K562 (cell line): ENCODE measurements at regions of chr6 and their contacts with region 1.

Region 1: GRCh38 chr6:75208298-75209183 is 2.7 kb upstream of the COL12A1 start:
- DNase-seq: peak; percentile 63 to 81 (median 70)
- ATAC-seq: peak; percentile 94
- H3K4me3 ChIP-seq: no peak overlapping the region
- H3K27ac ChIP-seq: no peak overlapping the region
- H3K4me1 ChIP-seq: peaks cover 0 to 10% of the 10 kb centered on the region in 2 experiments; a peak in 1 of 5 replicates
- H3K27me3 ChIP-seq: peaks cover 21 to 45% of the 10 kb centered on the region in 2 experiments; a peak in 4 of 5 replicates
- CTCF ChIP-seq: peak; percentile 82 to 91 (median 90)
- EP300 ChIP-seq: no peak
- POLR2A ChIP-seq: no peak
- RAD21 ChIP-seq: peak; percentile 88 to 92

Region 2: DNA sequence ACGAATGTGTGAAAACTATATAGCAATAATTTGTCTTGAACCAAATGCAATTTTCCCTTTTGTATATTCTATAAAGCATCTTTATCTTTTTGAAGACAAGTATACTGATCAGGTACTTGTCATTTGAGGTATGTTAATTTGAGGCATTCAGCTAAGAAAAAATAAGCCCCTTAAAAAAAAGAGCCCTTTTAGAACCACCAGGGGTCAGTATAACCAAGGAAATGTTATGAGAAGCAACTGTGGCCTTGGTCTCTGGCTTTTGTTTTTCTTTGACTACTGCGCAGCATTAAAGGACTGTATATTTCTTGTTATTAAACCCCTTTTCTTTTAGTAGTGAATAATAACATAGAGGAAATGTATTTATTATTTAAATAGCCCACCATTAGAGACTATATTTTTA is 1469.4 kb before region 1 on chr6:
- CTCF ChIA-PET with region 1: interaction called, 12 read pairs
- POLR2A ChIA-PET with region 1: no interaction called
- in situ Hi-C with region 1: loop called (anchors 5 kb)
- intact Hi-C with region 1: loop called (anchors 1 kb)
- DNase-seq: peak; percentile 34 to 73 (median 45)
- ATAC-seq: peak; percentile 88
- H3K4me3 ChIP-seq: no peak overlapping the region
- H3K27ac ChIP-seq: no peak overlapping the region
- H3K4me1 ChIP-seq: no peaks in the 10 kb centered on the region
- H3K27me3 ChIP-seq: no peaks in the 10 kb centered on the region
- CTCF ChIP-seq: peak; percentile 59 to 88 (median 59)
- EP300 ChIP-seq: no peak
- POLR2A ChIP-seq: no peak
- RAD21 ChIP-seq: peak; percentile 90 to 91

Region 3: DNA sequence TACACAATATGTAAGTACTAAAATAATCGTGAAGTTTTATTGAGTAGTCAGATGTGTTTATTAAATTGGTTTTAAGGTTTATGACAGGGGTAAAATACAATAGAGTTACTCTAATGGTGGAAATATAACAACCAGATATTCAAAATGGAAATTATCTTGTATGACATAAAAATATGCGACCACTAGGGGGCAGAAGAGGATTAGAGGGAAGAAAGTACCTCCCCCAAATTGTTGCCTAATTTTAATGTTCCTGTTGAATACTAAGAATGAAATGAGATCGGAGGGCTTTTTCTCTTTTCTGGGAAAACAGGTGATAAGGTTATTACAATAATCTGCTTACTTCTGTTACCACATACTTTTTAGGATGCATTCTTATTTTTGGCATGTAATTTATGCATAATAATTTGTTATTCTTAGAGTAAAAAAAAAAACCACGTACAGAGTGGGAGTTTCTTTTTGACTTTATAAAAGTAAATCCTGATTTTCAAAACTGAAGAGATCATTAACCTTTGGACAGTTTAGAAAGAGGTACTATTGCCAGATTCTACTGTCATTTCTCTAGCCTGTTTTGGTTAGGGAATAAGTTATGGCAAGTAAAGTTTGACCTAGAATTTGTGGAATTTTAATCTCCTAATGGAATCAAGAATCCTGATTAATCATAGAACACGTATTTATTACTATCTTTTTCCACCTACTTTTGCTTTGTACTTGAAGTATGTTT is 1353.4 kb before region 1 on chr6:
- CTCF ChIA-PET with region 1: interaction called, 10 read pairs
- POLR2A ChIA-PET with region 1: no interaction called
- in situ Hi-C with region 1: no loop called
- intact Hi-C with region 1: loop called (anchors 1 kb)
- DNase-seq: peak; percentile 29 to 71 (median 34)
- ATAC-seq: peak; percentile 56; the same call in 2 of the 3 replicates
- H3K4me3 ChIP-seq: no peak overlapping the region
- H3K27ac ChIP-seq: no peak overlapping the region
- H3K4me1 ChIP-seq: no peaks in the 10 kb centered on the region
- H3K27me3 ChIP-seq: no peaks in the 10 kb centered on the region
- CTCF ChIP-seq: peak; percentile 44 to 77 (median 50); a peak in 4 of 6 replicates
- EP300 ChIP-seq: no peak
- POLR2A ChIP-seq: no peak
- RAD21 ChIP-seq: peak; percentile 70 to 82

Region 4: GRCh38 chr6:74091136-74091793 is 1117.3 kb before region 1 on chr6:
- CTCF ChIA-PET with region 1: no interaction called
- POLR2A ChIA-PET with region 1: no interaction called
- in situ Hi-C with region 1: no loop called
- intact Hi-C with region 1: loop called (anchors 5 kb)
- DNase-seq: peak; percentile 17 to 26 (median 18)
- ATAC-seq: peak; percentile 62; the same call in 2 of the 3 replicates
- H3K4me3 ChIP-seq: no peak overlapping the region
- H3K27ac ChIP-seq: no peak overlapping the region
- H3K4me1 ChIP-seq: no peaks in the 10 kb centered on the region
- H3K27me3 ChIP-seq: no peaks in the 10 kb centered on the region
- CTCF ChIP-seq: peak; percentile 12 to 62 (median 50); a peak in 4 of 6 replicates
- EP300 ChIP-seq: no peak
- POLR2A ChIP-seq: no peak
- RAD21 ChIP-seq: peak in 1 of 2 experiments; percentile 36; a peak in 2 of 4 replicates

Region 5: GRCh38 chr6:75349262-75349984 is 140.9 kb after region 1 on chr6:
- CTCF ChIA-PET with region 1: no interaction called
- POLR2A ChIA-PET with region 1: no interaction called
- in situ Hi-C with region 1: no loop called
- intact Hi-C with region 1: no loop called
- DNase-seq: peak; percentile 10 to 27 (median 12)
- ATAC-seq: peak; percentile 74
- H3K4me3 ChIP-seq: peak overlapping the region; percentile 21
- H3K27ac ChIP-seq: no peak overlapping the region
- H3K4me1 ChIP-seq: peaks cover 6 to 8% of the 10 kb centered on the region in 2 experiments; a peak in 3 of 5 replicates
- H3K27me3 ChIP-seq: peaks cover 3 to 4% of the 10 kb centered on the region in 2 experiments; a peak in 2 of 5 replicates
- CTCF ChIP-seq: 0 out of 6 replicates have a peak, but pooled peaks of 1 of the 3 experiments have one; percentile 7
- EP300 ChIP-seq: no peak
- POLR2A ChIP-seq: no peak
- RAD21 ChIP-seq: no peak; a peak in 1 of 4 replicates